ENCODE measurements at regions of chr3 and their contacts with region 1.

Region 1: GRCh38 chr3:183122257-183122932 is 23.1 kb upstream of the MCCC1 start:
- DNase-seq: peak in 1 of 4 donors; percentile 50
- ATAC-seq: peak; percentile 76
- H3K4me3 ChIP-seq: no peak overlapping the region
- H3K27ac ChIP-seq: peak overlapping the region in 2 of 4 donors; percentile 5 to 71
- H3K4me1 ChIP-seq: peaks cover 9% of the 10 kb centered on the region
- H3K27me3 ChIP-seq: no peaks in the 10 kb centered on the region
- CTCF ChIP-seq: peak; percentile 69 to 92 (median 88)
- POLR2A ChIP-seq: no peak

Region 2: GRCh38 chr3:183188895-183189462 is 66.6 kb after region 1 on chr3:
- intact Hi-C with region 1: loop called (anchors 10 kb)
- DNase-seq: peak; percentile 40 to 73 (median 58)
- ATAC-seq: peak; percentile 30
- H3K4me3 ChIP-seq: no peak overlapping the region
- H3K27ac ChIP-seq: no peak overlapping the region
- H3K4me1 ChIP-seq: peaks cover 8% of the 10 kb centered on the region
- H3K27me3 ChIP-seq: no peaks in the 10 kb centered on the region
- CTCF ChIP-seq: peak in 5 of 7 experiments; percentile 26 to 44 (median 34)
- POLR2A ChIP-seq: no peak

Measured in body of pancreas (tissue), 4 donors.